Ascending aorta (tissue), 2 donors: ENCODE measurements at regions of chr6 and their contacts with region 1.

Region 1: DNA sequence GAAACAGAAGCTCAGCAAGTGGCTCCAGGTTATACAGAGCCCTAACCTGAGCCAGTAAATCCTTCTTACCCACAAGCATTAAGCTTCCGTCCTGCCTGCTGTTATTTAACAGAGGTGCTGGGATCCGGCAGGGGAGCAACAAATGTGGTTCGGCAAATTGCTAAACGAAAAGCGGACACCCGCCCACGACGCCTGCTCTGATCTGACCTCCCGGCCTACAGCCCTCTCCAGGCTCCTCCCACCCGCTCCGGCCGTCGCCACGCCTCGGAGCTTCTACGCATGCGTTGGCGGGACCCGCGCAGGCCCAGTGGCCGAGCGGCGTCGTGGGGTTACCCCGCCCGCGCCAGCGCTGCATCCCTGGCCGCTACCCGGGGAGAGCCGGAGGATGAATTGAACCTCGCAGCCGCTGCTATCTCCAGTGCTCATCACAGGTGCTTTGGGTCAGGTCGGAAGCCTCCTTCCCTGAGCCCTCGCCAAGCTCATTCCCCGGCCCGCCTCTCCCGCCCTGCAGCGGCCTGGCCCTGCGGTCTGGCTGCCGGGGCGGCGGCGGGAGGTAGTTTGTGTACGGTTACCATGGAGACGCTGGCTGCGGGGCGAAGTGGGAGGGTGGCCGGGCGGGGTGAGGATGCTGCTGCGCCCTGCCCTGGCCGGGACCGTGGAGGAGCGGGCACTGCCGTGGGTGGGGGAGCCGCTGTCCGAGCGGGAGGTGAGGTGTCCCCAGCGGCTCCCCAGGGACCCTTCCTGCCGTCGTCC is at the start of gene ARMC2:
- DNase-seq: peak; percentile 63 to 94
- H3K4me3 ChIP-seq: peak within 1 kb of the TSS; percentile 53 to 79
- H3K27ac ChIP-seq: peak within 1 kb of the TSS; percentile 55 to 77
- H3K4me1 ChIP-seq: peaks cover 0 to 15% of the 10 kb centered on the region in 2 donors
- H3K27me3 ChIP-seq: no peaks in the 10 kb centered on the region
- CTCF ChIP-seq: no peak
- total RNA-seq, gene ARMC2: 0.11 TPM

Region 2: GRCh38 chr6:108874470-108875160 is 26.3 kb after region 1 on chr6:
- intact Hi-C with region 1: loop called (anchors 1 kb)
- DNase-seq: peak in 1 of 2 donors; percentile 72
- H3K4me3 ChIP-seq: peak overlapping the region in 1 of 2 donors; percentile 36
- H3K27ac ChIP-seq: peak overlapping the region; percentile 80 to 90
- H3K4me1 ChIP-seq: peaks cover 8 to 44% of the 10 kb centered on the region in 2 donors
- H3K27me3 ChIP-seq: no peaks in the 10 kb centered on the region
- CTCF ChIP-seq: no peak

Region 3: GRCh38 chr6:108947114-108947854 is 99.0 kb after region 1 on chr6:
- intact Hi-C with region 1: loop called (anchors 5 kb)
- DNase-seq: no peak
- H3K4me3 ChIP-seq: no peak overlapping the region
- H3K27ac ChIP-seq: peak overlapping the region; percentile 88 to 91
- H3K4me1 ChIP-seq: peaks cover 8 to 44% of the 10 kb centered on the region in 2 donors
- H3K27me3 ChIP-seq: no peaks in the 10 kb centered on the region
- CTCF ChIP-seq: no peak